PC-9 (cell line): ENCODE measurements at regions of chr1 and their contacts with region 1.

Region 1: DNA sequence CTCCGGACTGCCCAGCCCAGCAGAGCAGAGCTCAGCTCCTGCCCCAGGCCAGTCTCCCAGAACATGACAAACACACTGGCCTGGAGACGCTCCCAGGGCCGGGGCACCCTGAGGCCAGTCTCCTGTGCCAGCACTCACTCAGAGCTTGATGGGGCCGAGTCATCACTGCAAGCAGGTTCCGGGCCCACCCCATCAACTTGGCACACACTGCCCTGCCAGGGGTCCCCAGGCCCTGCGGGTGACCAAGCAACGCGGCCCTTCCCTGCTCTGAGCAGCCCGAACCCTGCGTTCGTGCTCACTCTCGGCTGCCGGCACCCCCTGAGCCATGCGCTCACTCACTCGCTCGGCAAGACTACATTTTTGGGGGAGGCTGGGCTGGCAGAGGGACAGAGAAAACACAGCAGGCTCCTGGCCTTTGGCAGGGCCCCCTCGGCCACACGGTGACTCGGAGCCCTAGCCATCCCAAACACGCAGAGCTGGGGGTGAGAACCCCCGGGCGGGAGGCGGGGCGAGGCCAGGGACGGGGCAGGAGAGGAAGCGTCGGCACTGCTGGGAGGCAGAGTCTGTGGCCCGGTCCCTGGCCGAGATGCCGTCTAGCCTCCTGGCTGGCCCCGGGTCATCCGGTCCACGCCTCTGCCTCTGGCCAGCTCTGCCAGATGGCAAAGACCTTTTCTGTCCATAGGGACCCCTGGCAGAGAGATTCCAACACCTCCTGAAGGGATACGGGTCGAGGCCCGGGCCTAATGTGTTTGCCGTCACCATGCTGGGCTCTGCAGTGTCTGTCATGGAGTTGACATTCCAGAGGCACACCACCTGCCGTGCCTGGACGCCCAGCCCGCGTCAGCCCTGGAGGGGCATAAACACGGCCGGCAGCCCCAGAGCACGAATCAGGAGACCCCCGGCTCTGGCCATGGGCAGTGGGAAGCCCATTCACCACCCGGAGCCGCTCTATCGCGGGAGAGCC is 68.0 kb downstream of the MEGF6 start:
- DNase-seq: peak; percentile 94 to 97
- H3K4me3 ChIP-seq: peak overlapping the region; percentile 52
- H3K27ac ChIP-seq: peak overlapping the region; percentile 97
- H3K4me1 ChIP-seq: peaks cover 77% of the 10 kb centered on the region
- H3K27me3 ChIP-seq: no peaks in the 10 kb centered on the region
- CTCF ChIP-seq: no peak

Region 2: GRCh38 chr1:3460672-3461131 is 82.7 kb before region 1 on chr1:
- CTCF ChIA-PET with region 1: no interaction called
- POLR2A ChIA-PET with region 1: no interaction called
- intact Hi-C with region 1: loop called (anchors 5 kb)
- DNase-seq: peak in 1 of 2 experiments; percentile 56
- H3K4me3 ChIP-seq: no peak overlapping the region
- H3K27ac ChIP-seq: no peak overlapping the region
- H3K4me1 ChIP-seq: peaks cover 14% of the 10 kb centered on the region
- H3K27me3 ChIP-seq: no peaks in the 10 kb centered on the region
- CTCF ChIP-seq: no peak

Region 3: DNA sequence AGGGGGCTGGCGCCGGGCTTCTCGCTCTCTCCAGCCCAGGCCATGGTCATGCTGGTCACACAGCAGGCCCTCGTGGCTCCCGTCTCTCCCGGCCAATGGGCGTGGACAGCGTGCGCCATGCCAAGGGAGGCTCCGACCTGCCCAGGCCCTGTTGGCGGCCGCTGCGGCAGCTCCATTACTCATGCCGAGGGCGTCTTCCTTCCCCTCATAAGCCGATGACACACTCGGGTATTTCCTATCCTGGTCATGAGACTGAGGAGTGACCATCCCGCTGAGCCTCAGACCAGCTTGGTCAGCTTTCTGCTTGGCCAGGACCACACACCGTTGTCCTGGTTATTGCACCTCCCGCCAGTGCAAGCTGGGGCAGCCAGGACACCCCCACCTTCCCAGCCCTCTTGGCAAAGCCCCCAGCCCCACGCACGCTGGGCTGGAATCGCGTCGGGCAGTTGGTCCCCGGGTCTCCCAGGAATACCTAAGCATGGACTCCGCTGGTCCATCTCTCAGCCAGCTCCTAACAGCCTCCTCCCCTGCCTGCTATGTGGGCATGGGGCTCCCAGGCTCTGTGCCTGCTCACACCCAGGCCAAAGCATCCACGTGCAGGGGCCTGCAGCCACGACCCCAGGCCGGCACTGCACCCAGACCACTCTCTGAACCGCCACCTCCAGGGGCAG is 39.1 kb before region 1 on chr1:
- CTCF ChIA-PET with region 1: no interaction called
- POLR2A ChIA-PET with region 1: interaction called, 3 read pairs
- intact Hi-C with region 1: loop called (anchors 1 kb)
- DNase-seq: peak; percentile 88 to 93
- H3K4me3 ChIP-seq: no peak overlapping the region
- H3K27ac ChIP-seq: peak overlapping the region; percentile 69
- H3K4me1 ChIP-seq: peaks cover 31% of the 10 kb centered on the region
- H3K27me3 ChIP-seq: no peaks in the 10 kb centered on the region
- CTCF ChIP-seq: no peak

Region 4: DNA sequence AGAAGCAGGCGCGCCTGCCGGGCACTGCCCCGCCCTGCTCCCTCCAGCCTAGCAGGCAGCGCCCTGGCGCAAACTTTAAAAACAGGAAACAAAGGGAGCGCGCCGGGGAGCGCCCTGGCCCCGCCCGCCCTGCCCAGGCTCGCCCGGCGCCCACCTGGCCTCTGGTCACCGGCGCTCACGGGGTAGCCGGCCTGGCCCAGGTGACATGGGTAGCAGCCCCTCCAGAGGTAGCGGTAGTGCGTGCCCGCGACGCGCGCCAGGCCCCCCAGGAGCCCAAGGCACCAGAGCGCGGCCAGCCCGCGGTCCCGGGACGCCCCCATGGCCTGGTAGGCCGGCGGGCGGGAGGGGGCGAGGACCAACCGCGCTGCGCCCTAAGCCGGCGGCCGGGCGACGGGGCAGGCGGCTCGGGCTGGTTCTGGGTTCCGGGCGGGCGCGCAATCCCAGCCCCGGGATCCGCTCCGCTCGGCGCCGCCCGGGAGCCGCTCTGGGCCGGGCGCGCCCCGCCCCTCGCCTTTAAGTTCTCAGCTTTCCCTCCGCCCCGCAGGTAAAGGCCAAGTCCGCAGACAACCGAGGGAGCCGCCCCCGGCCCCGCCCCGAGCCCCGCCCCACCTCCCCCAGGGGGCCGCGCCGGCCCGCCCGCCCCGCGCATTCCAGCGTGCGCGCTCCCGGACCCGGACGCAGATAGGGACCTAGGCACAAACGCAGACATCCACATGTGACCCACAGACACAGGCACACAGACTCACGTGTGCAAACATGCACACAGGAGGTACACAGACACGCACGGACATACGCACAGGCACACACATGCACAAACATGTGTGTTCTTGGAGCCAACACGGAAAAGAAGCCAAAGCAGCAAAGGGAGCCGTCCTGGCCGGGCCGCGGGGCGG is 12.2 kb before region 1 on chr1:
- CTCF ChIA-PET with region 1: no interaction called
- POLR2A ChIA-PET with region 1: interaction called, 10 read pairs
- intact Hi-C with region 1: no loop called
- DNase-seq: peak; percentile 69 to 81
- H3K4me3 ChIP-seq: peak overlapping the region; percentile 94
- H3K27ac ChIP-seq: 0 out of 2 replicates have a peak overlapping the region, but pooled peaks have one; percentile 29
- H3K4me1 ChIP-seq: peaks cover 10% of the 10 kb centered on the region
- H3K27me3 ChIP-seq: no peaks in the 10 kb centered on the region
- CTCF ChIP-seq: no peak

Region 5: GRCh38 chr1:3555131-3555920 is 12.0 kb after region 1 on chr1:
- CTCF ChIA-PET with region 1: interaction called, 3 read pairs
- POLR2A ChIA-PET with region 1: interaction called, 7 read pairs
- intact Hi-C with region 1: loop called (anchors 1 kb)
- DNase-seq: peak; percentile 62 to 85
- H3K4me3 ChIP-seq: no peak overlapping the region
- H3K27ac ChIP-seq: no peak overlapping the region
- H3K4me1 ChIP-seq: peaks cover 37% of the 10 kb centered on the region
- H3K27me3 ChIP-seq: no peaks in the 10 kb centered on the region
- CTCF ChIP-seq: no peak